RWPE1 (cell line): ENCODE measurements at regions of chr14 and their contacts with region 1.

Region 1: GRCh38 chr14:68956724-68957123 is 22.4 kb downstream of the ACTN1 start:
- DNase-seq: no peak
- H3K27ac ChIP-seq: peak overlapping the region; percentile 77; the same call in 1 of the 2 replicates
- CTCF ChIP-seq: no peak

Region 2: GRCh38 chr14:69002069-69002468 is 45.3 kb after region 1 on chr14:
- CTCF ChIA-PET with region 1: interaction called, 11 read pairs
- POLR2A ChIA-PET with region 1: no interaction called
- DNase-seq: no peak
- H3K27ac ChIP-seq: no peak overlapping the region
- CTCF ChIP-seq: no peak